CD8-positive, alpha-beta T cell (primary cell): ENCODE measurements at regions of chr2 and their contacts with region 1.

Region 1: GRCh38 chr2:241321886-241322285 is 6.2 kb downstream of the SEPTIN2 start:
- DNase-seq: no peak
- ATAC-seq: no peak
- H3K4me3 ChIP-seq: no peak overlapping the region
- H3K4me3 Mint-ChIP-seq: no peak overlapping the region
- H3K27ac ChIP-seq: no peak overlapping the region
- H3K27ac Mint-ChIP-seq: peak overlapping the region; percentile 30
- H3K4me1 ChIP-seq: peaks cover 41% of the 10 kb centered on the region
- H3K4me1 Mint-ChIP-seq: peaks cover 71% of the 10 kb centered on the region
- H3K27me3 ChIP-seq: no peaks in the 10 kb centered on the region
- H3K27me3 Mint-ChIP-seq: no peaks in the 10 kb centered on the region
- CTCF ChIP-seq: no peak

Region 2: GRCh38 chr2:241339839-241340630 is 18.1 kb after region 1 on chr2:
- CTCF ChIA-PET with region 1: interaction called, 3 read pairs
- POLR2A ChIA-PET with region 1: interaction called, 5 read pairs
- intact Hi-C with region 1: loop called in 1 of 2 experiments (anchors 1 kb)
- DNase-seq: no peak
- ATAC-seq: no peak
- H3K4me3 ChIP-seq: no peak overlapping the region
- H3K4me3 Mint-ChIP-seq: no peak overlapping the region
- H3K27ac ChIP-seq: peak overlapping the region in 1 of 2 experiments; percentile 18
- H3K27ac Mint-ChIP-seq: peak overlapping the region; percentile 68
- H3K4me1 ChIP-seq: peaks cover 14% of the 10 kb centered on the region
- H3K4me1 Mint-ChIP-seq: peaks cover 31% of the 10 kb centered on the region
- H3K27me3 ChIP-seq: no peaks in the 10 kb centered on the region
- H3K27me3 Mint-ChIP-seq: no peaks in the 10 kb centered on the region
- CTCF ChIP-seq: no peak